Gastrocnemius medialis (tissue), 4 donors: ENCODE measurements at regions of chr10 and their contacts with region 1.

Region 1: DNA sequence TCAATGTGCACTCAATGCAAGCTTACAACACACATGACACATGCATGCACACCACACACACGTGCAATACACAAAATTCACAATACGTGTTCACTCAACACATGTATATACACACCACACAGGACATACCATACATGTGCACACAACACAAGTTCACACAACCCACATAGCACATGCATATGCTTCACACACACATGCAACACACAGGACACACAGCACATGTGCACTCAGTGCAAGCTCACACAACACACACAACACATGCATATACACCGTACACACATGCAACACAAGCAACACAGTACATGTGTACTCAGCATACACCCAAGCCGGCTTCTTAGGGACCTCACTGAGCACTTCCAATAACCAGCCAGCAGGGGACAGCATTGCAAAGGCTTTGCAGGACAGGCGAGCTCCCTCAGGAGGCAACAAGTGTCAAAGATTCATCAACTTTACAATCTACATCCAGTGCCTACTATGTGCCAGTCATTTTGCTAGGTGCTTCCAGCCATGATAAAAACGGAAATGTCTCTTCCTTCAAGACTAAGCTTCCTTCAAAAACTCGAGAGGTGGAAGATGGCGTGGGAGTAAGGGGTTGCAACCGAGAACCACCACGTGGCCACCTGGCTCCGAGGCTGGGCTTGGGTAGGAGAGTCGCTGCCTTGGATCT is 61.1 kb downstream of the JCAD start:
- DNase-seq: peak; percentile 74 to 86
- ATAC-seq: peak; percentile 18 to 23
- H3K4me3 ChIP-seq: no peak overlapping the region
- H3K27ac ChIP-seq: peak overlapping the region; percentile 30 to 98 (median 92)
- H3K4me1 ChIP-seq: peaks cover 60 to 66% of the 10 kb centered on the region in 2 donors
- H3K27me3 ChIP-seq: no peaks in the 10 kb centered on the region
- CTCF ChIP-seq: peak; percentile 96 to 99 (median 98)
- POLR2A ChIP-seq: no peak

Region 2: DNA sequence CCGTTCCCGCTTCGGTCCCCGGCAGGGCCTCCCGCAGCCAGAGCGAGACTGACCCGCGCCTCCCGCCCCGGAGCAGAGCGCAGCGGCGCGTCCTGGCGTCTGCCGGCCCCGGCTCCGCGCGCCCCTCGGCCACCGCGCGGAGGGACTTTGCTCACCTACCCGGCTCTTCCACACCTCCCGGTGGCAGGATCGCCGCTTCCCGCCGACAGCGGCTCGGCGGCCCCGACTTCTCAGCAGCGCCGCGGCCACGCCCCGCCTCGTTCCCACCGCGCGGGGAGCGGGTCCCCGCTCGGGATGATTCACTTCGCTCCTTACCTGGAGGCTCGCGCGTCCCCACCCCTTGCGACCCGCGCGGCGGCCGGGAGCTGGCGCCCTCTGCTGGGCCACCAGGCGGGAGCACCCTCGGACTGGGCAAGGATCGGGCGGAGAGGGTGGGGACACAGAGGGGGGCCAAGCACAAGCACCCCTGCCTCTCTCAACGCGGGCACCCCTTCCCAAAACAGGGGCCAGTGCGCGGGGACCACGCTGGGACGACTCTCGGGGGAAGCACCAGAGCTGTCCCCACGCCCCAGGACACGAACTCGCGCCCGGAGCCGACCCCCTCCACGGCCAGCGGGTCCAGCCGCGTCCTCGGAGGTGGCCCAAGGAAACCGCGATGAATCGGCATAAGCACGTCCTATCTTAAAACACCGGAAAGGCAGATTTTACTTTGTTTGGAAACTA is 262.5 kb before region 1 on chr10:
- in situ Hi-C with region 1: no loop called
- intact Hi-C with region 1: loop called (anchors 2 kb)
- DNase-seq: peak; percentile 84 to 89
- ATAC-seq: peak; percentile 63 to 76
- H3K4me3 ChIP-seq: peak overlapping the region; percentile 79 to 97 (median 87)
- H3K27ac ChIP-seq: peak overlapping the region; percentile 96 to 99 (median 97)
- H3K4me1 ChIP-seq: peaks cover 34 to 39% of the 10 kb centered on the region in 2 donors
- H3K27me3 ChIP-seq: no peaks in the 10 kb centered on the region
- CTCF ChIP-seq: peak; percentile 93 to 99 (median 97)
- POLR2A ChIP-seq: peak; percentile 90 to 94

Region 3: GRCh38 chr10:29946953-29947700 is 51.1 kb before region 1 on chr10:
- in situ Hi-C with region 1: loop called in 1 of 4 experiments (anchors 5 kb)
- intact Hi-C with region 1: loop called (anchors 1 kb)
- DNase-seq: peak; percentile 84 to 93
- ATAC-seq: peak; percentile 84 to 87
- H3K4me3 ChIP-seq: peak overlapping the region; percentile 14 to 39 (median 24)
- H3K27ac ChIP-seq: peak overlapping the region; percentile 91 to 99 (median 96)
- H3K4me1 ChIP-seq: peaks cover 32 to 36% of the 10 kb centered on the region in 2 donors
- H3K27me3 ChIP-seq: no peaks in the 10 kb centered on the region
- CTCF ChIP-seq: no peak
- POLR2A ChIP-seq: peak; percentile 25 to 60

Region 4: DNA sequence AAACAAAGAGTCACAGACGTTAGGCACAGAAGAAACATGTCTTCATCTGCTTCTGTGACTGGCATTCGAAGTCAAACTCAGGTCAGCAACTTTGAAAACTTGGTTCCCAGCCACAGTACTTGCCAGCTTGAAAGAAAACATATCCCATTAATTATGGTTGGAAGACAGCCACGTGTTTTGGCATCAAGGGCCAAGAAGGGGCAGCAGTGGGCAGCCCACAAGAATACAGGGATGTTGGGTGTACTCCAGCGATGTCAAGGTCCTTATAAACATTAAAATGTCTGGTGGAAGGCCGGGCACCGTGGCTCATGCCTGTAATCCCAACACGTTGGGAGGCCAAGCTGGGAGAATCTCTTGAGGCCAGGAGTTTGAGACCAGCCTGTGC is 31.6 kb after region 1 on chr10:
- in situ Hi-C with region 1: no loop called
- intact Hi-C with region 1: no loop called
- DNase-seq: no peak
- ATAC-seq: no peak
- H3K4me3 ChIP-seq: no peak overlapping the region
- H3K27ac ChIP-seq: peak overlapping the region; percentile 57 to 81 (median 69)
- H3K4me1 ChIP-seq: peaks cover 0 to 13% of the 10 kb centered on the region in 2 donors
- H3K27me3 ChIP-seq: no peaks in the 10 kb centered on the region
- CTCF ChIP-seq: no peak
- POLR2A ChIP-seq: no peak

Region 5: DNA sequence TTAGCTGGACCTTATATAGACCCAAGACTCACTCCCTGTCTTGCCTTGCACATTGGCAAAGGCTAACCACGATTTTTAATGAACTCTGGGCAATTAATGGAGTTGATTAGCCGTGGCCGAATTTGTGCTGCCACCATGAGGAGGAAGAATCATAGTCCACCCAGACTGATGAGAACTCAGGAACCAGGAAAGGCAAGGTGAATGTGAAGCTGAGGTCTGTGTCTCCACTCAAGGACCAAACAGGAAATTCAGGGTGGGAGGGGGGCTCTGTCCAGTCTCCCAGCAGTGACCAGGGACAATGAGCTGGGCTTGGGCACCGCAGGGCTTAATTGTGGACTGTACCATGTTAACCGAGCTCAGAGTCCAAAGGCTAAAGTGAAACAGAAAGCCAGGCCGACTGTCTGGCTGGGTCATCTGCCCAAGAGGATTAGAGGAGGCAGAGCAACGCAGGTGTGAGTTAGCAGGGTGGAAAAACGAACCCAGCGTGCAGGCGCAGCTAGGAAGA is 188.1 kb after region 1 on chr10:
- in situ Hi-C with region 1: no loop called
- intact Hi-C with region 1: loop called (anchors 5 kb)
- DNase-seq: no peak
- ATAC-seq: peak; percentile 29 to 62
- H3K4me3 ChIP-seq: peak overlapping the region; percentile 10 to 41 (median 30)
- H3K27ac ChIP-seq: peak overlapping the region; percentile 59 to 72 (median 67)
- H3K4me1 ChIP-seq: peaks cover 0 to 3% of the 10 kb centered on the region in 2 donors
- H3K27me3 ChIP-seq: no peaks in the 10 kb centered on the region
- CTCF ChIP-seq: peak in 1 of 5 experiments; percentile 14
- POLR2A ChIP-seq: no peak

Region 6: GRCh38 chr10:30247704-30248103 is 249.4 kb after region 1 on chr10:
- in situ Hi-C with region 1: loop called in 2 of 4 experiments (anchors 10 to 25 kb)
- intact Hi-C with region 1: no loop called
- DNase-seq: no peak
- ATAC-seq: no peak
- H3K4me3 ChIP-seq: no peak overlapping the region
- H3K27ac ChIP-seq: no peak overlapping the region
- H3K4me1 ChIP-seq: no peaks in the 10 kb centered on the region
- H3K27me3 ChIP-seq: no peaks in the 10 kb centered on the region
- CTCF ChIP-seq: no peak
- POLR2A ChIP-seq: no peak